CD4-positive, alpha-beta T cell (primary cell): ENCODE measurements at regions of chr7 and their contacts with region 1.

Region 1: GRCh38 chr7:107173691-107174406 is 5.0 kb downstream of the HBP1 start:
- DNase-seq: no peak
- ATAC-seq: no peak
- H3K4me3 ChIP-seq: no peak overlapping the region
- H3K4me3 Mint-ChIP-seq: peak overlapping the region; percentile 31
- H3K27ac ChIP-seq: no peak overlapping the region
- H3K27ac Mint-ChIP-seq: peak overlapping the region; percentile 11
- H3K4me1 ChIP-seq: peaks cover 19% of the 10 kb centered on the region
- H3K4me1 Mint-ChIP-seq: peaks cover 80% of the 10 kb centered on the region
- H3K27me3 ChIP-seq: no peaks in the 10 kb centered on the region
- H3K27me3 Mint-ChIP-seq: no peaks in the 10 kb centered on the region
- CTCF ChIP-seq: no peak

Region 2: GRCh38 chr7:107014387-107015023 is 159.3 kb before region 1 on chr7:
- CTCF ChIA-PET with region 1: no interaction called
- POLR2A ChIA-PET with region 1: no interaction called
- intact Hi-C with region 1: no loop called
- DNase-seq: no peak
- ATAC-seq: no peak
- H3K4me3 ChIP-seq: no peak overlapping the region
- H3K4me3 Mint-ChIP-seq: no peak overlapping the region
- H3K27ac ChIP-seq: no peak overlapping the region
- H3K27ac Mint-ChIP-seq: no peak overlapping the region
- H3K4me1 ChIP-seq: no peaks in the 10 kb centered on the region
- H3K4me1 Mint-ChIP-seq: no peaks in the 10 kb centered on the region
- H3K27me3 ChIP-seq: no peaks in the 10 kb centered on the region
- H3K27me3 Mint-ChIP-seq: peaks cover 6% of the 10 kb centered on the region
- CTCF ChIP-seq: no peak

Region 3: DNA sequence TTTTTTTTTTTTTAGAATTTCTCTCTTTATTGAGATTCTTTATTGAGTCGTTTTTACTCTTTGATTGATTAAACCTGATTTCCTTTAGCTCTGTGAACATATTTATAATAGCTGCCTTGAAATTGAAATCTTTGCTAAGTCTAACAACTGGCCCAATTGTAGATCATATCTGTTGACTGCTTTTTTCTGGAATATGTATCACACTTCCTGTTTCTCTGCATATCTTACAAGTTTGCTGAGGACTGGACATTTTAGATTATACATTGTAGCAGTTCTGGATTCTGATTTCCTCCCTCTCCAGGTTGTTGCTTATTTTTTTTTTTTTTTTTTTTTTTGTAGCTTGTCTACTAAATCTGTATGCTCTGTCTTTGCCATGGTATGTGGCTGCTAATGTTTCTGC is 73.0 kb before region 1 on chr7:
- CTCF ChIA-PET with region 1: no interaction called
- POLR2A ChIA-PET with region 1: no interaction called
- intact Hi-C with region 1: no loop called
- DNase-seq: no peak
- ATAC-seq: no peak
- H3K4me3 ChIP-seq: no peak overlapping the region
- H3K4me3 Mint-ChIP-seq: no peak overlapping the region
- H3K27ac ChIP-seq: no peak overlapping the region
- H3K27ac Mint-ChIP-seq: no peak overlapping the region
- H3K4me1 ChIP-seq: peaks cover 5% of the 10 kb centered on the region
- H3K4me1 Mint-ChIP-seq: peaks cover 4% of the 10 kb centered on the region
- H3K27me3 ChIP-seq: no peaks in the 10 kb centered on the region
- H3K27me3 Mint-ChIP-seq: peaks cover 17% of the 10 kb centered on the region
- CTCF ChIP-seq: no peak

Region 4: GRCh38 chr7:107187774-107188173 is 13.9 kb after region 1 on chr7:
- CTCF ChIA-PET with region 1: interaction called, 5 read pairs
- POLR2A ChIA-PET with region 1: interaction called, 82 read pairs
- intact Hi-C with region 1: loop called in 1 of 2 experiments (anchors 2 kb)
- DNase-seq: no peak
- ATAC-seq: no peak
- H3K4me3 ChIP-seq: no peak overlapping the region
- H3K4me3 Mint-ChIP-seq: no peak overlapping the region
- H3K27ac ChIP-seq: no peak overlapping the region
- H3K27ac Mint-ChIP-seq: no peak overlapping the region
- H3K4me1 ChIP-seq: no peaks in the 10 kb centered on the region
- H3K4me1 Mint-ChIP-seq: peaks cover 43% of the 10 kb centered on the region
- H3K27me3 ChIP-seq: no peaks in the 10 kb centered on the region
- H3K27me3 Mint-ChIP-seq: no peaks in the 10 kb centered on the region
- CTCF ChIP-seq: no peak